ENCODE measurements at regions of chr18 and their contacts with region 1.

Region 1: DNA sequence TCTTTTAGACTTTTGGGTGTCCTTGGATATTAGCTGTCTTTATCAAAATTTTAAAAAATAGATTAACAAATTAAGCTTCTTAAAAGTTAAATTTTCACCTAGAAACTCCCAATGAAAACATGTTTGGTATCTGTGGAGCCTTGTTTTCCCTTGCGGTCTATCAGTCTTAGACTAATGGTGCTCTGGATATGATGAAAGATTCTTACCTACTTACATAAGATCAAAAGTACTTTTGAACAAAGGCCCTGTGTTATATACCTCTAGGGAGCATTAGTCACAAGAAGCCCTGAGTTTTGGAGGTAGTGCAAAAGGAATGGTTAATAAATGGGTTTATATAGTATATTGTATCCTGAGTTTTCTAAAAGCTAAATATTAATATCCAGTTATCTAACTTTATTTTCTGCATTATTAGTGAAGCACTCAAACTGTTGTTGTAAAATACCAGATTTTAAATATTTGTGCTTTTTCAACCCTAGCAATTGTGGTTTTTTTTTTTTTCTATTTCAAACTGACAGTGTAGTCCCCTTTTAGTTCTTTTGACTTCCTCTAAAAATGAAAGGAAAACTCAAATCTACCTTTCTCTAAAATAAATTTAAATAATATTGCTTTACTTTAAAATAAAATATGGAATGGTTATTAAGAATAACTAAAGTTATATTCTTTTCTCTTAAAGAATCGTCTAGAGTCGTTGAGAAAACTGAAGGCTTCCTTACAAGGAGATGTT is 18.1 kb downstream of the NDC80 start:
- DNase-seq: no peak
- H3K4me3 Mint-ChIP-seq: peak overlapping the region; percentile 58
- H3K27ac Mint-ChIP-seq: peak overlapping the region; percentile 84
- H3K4me1 Mint-ChIP-seq: peaks cover 43% of the 10 kb centered on the region
- H3K27me3 Mint-ChIP-seq: no peaks in the 10 kb centered on the region

Region 2: DNA sequence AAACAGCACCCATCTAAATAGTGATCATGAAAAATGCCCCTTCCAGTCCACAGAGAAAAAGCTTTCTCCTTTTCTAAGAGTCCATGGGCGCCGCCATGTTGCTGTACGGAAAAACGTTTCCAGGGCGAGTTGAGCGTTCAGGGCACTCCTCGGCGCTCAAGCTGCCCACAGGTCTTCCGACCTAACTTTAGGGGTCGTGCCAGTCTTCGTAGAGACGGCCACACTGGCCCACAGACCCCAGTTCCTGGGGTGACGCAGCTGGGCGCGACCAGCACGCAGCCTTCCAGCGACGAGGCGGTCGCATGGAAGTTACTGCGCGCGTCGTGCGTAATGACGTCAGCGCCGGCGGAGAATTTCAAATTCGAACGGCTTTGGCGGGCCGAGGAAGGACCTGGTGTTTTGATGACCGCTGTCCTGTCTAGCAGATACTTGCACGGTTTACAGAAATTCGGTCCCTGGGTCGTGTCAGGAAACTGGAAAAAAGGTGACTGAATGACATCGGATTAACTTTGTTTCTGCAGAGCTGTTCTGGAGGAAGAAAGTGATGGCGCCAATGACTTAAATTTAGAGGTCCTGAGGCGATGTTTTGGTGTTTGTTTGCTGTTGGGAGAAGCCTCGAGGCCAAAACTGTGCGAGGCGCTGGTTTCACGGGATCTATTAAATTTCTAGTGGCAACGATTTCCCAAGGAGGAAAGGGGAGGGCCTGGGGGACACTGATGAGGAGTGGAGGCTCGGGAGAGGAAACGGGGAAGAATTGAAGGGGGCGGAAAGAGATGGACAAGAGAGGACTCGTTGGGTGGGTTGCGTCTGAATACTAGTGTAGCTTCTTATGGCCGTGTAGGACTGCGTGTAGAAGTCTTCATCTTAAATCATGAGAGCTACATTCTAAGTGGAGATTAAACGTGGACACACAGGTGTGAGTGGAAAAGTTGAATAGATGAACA is 18.0 kb before region 1 on chr18 and contains the starts of genes METTL4 and NDC80:
- intact Hi-C with region 1: no loop called
- DNase-seq: peak; percentile 82
- H3K4me3 Mint-ChIP-seq: peak within 1 kb of the TSS; percentile 99
- H3K27ac Mint-ChIP-seq: peak within 1 kb of the TSS; percentile 98
- H3K4me1 Mint-ChIP-seq: peaks cover 52% of the 10 kb centered on the region
- H3K27me3 Mint-ChIP-seq: no peaks in the 10 kb centered on the region
- total RNA-seq, gene METTL4: 17.8 and 18.3 TPM in 2 replicates
- total RNA-seq, gene NDC80: 41.5 and 43.0 TPM in 2 replicates

Region 3: DNA sequence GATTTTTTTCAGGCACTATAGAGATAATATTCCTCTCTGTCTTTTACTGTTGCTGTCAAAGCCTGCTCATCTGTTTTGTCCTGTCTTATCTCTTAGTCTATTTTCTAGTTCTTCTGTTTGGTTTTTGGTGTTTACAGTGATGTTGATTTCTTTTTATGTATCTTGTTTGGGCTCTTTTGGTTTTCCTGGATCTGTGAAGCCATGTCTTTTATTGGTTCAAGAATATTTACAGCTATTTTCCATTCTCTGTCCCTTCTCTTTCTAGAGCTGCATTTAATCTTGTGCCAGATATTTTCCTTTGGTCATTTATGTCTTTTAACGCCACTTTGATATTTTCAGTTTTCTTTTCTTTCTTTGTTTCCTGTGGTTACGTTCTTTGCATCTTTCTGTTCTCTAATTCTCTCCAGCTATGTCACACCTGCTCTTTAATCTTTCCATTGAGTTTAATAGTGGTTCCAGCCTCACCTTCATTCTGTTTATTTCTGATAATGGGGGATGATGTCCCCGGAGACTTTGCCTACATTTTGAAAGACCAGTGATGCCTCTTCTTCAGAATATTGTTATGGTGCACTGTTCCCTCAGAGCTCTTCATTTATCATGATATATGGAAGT is 98.0 kb after region 1 on chr18:
- intact Hi-C with region 1: loop called (anchors 5 kb)
- DNase-seq: no peak
- H3K4me3 Mint-ChIP-seq: peak overlapping the region; percentile 6
- H3K27ac Mint-ChIP-seq: peak overlapping the region; percentile 81
- H3K4me1 Mint-ChIP-seq: peaks cover 54% of the 10 kb centered on the region
- H3K27me3 Mint-ChIP-seq: no peaks in the 10 kb centered on the region